PC-9 (cell line): ENCODE measurements at regions of chr5 and their contacts with region 1.

Region 1: GRCh38 chr5:68780299-68780955 is 313.4 kb upstream of the SLC30A5 start:
- DNase-seq: no peak
- H3K4me3 ChIP-seq: no peak overlapping the region
- H3K27ac ChIP-seq: no peak overlapping the region
- H3K4me1 ChIP-seq: no peaks in the 10 kb centered on the region
- H3K27me3 ChIP-seq: no peaks in the 10 kb centered on the region
- CTCF ChIP-seq: no peak

Region 2: DNA sequence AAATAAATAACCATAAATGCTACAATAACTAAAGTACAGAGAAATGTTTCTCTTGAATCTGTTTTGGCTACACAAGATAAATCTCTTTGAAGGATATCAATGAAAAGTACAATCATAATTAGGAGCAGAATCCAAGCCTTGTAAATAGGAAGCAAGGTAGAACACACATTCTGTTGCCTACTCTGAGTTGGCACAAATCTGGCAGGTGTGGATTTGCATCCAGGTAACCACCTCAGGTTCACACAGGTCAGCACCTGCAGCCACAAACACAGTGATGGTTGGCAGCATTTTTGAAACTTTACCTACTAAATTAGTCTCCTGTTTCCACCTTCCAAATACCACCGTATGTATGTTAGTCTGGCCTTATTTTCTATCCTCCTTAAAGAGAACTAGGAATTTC is 670.2 kb before region 1 on chr5:
- CTCF ChIA-PET with region 1: no interaction called
- POLR2A ChIA-PET with region 1: interaction called, 12 read pairs
- intact Hi-C with region 1: no loop called
- DNase-seq: no peak
- H3K4me3 ChIP-seq: no peak overlapping the region
- H3K27ac ChIP-seq: no peak overlapping the region
- H3K4me1 ChIP-seq: no peaks in the 10 kb centered on the region
- H3K27me3 ChIP-seq: no peaks in the 10 kb centered on the region
- CTCF ChIP-seq: no peak